Heart left ventricle (tissue), 16 donors: ENCODE measurements at regions of chr1 and their contacts with region 1.

Region 1: GRCh38 chr1:110460253-110461220 is 9.6 kb downstream of the PROK1 start:
- DNase-seq: peak in 4 of 5 donors; percentile 42 to 70 (median 64)
- ATAC-seq: peak; percentile 59 to 83 (median 82)
- H3K4me3 ChIP-seq: no peak overlapping the region
- H3K27ac ChIP-seq: no peak overlapping the region
- H3K4me1 ChIP-seq: no peaks in the 10 kb centered on the region
- H3K27me3 ChIP-seq: no peaks in the 10 kb centered on the region
- CTCF ChIP-seq: peak; percentile 89 to 98 (median 94)
- POLR2A ChIP-seq: no peak

Region 2: GRCh38 chr1:110203021-110203661 is 257.4 kb before region 1 on chr1:
- intact Hi-C with region 1: loop called (anchors 1 to 5 kb)
- DNase-seq: peak in 2 of 5 donors; percentile 43 to 44
- ATAC-seq: peak; percentile 30 to 57 (median 46)
- H3K4me3 ChIP-seq: no peak overlapping the region
- H3K27ac ChIP-seq: no peak overlapping the region
- H3K4me1 ChIP-seq: peaks cover 0 to 11% (median 0%) of the 10 kb centered on the region in 12 donors
- H3K27me3 ChIP-seq: no peaks in the 10 kb centered on the region
- CTCF ChIP-seq: peak; percentile 78 to 93 (median 86)
- POLR2A ChIP-seq: no peak

Region 3: GRCh38 chr1:110312188-110313121 is 148.1 kb before region 1 on chr1:
- intact Hi-C with region 1: loop called (anchors 2 to 10 kb)
- DNase-seq: peak; percentile 83 to 89 (median 85)
- ATAC-seq: peak; percentile 89 to 96 (median 94)
- H3K4me3 ChIP-seq: no peak overlapping the region
- H3K27ac ChIP-seq: no peak overlapping the region
- H3K4me1 ChIP-seq: peaks cover 0 to 50% (median 17%) of the 10 kb centered on the region in 12 donors
- H3K27me3 ChIP-seq: no peaks in the 10 kb centered on the region
- CTCF ChIP-seq: peak; percentile 84 to 98 (median 94)
- POLR2A ChIP-seq: no peak

Region 4: DNA sequence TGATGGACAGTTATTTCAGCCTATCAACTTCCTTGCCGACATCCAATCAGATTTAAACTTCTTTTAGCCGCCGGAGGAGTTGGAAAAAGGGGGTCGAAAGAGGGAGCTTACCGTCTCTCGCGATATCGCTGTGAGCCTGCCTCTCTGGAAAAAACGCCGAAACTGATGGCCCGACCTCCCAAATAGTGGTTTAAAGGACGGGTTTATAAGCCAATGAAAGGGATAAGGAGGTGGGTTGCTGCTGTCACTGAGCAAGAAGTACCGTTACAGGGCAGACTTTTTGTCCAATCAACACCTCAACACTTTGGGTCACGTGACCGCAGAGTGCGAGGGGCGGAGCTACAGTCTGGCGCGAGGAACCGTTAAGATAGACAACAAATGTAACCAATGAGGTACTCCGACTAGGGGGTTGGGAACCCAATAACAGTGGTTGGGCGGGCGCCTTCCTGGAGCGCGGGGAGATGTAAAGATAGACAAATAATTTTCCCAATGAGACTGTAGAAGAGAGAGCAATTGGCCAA is 121.6 kb before region 1 on chr1 and contains the start of gene RBM15:
- intact Hi-C with region 1: loop called in 1 of 10 experiments (anchors 5 kb)
- DNase-seq: peak; percentile 98 to 99 (median 99)
- ATAC-seq: peak; percentile 82 to 91 (median 88)
- H3K4me3 ChIP-seq: peak within 1 kb of the TSS; percentile 65 to 95 (median 82)
- H3K27ac ChIP-seq: peak within 1 kb of the TSS; percentile 89 to 100 (median 97)
- H3K4me1 ChIP-seq: peaks cover 5 to 61% (median 50%) of the 10 kb centered on the region in 12 donors
- H3K27me3 ChIP-seq: no peaks in the 10 kb centered on the region
- CTCF ChIP-seq: no peak
- POLR2A ChIP-seq: no peak
- total RNA-seq, gene RBM15: 14.1 to 24.4 (median 19.2) TPM

Region 5: DNA sequence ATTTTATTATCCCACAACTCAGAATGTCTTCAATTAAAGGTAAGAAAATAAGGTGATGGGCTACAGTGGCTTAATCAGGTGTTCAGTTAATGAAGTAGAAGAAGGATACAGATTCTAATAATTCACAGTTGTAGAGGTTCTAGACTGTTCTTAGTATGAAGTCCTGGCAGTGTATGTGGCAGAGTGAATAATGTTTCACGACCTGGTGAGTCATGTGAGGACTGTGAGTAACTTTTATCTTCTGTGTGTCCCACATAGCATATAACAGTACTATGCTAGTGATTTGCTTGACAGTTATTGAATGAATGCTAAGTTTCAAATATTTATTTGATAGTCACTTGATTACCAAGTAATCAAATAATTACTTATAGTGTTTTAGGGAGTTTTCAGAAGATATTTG is 89.7 kb before region 1 on chr1:
- intact Hi-C with region 1: no loop called
- DNase-seq: no peak
- ATAC-seq: peak in 3 of 4 donors; percentile 58 to 75 (median 68)
- H3K4me3 ChIP-seq: no peak overlapping the region
- H3K27ac ChIP-seq: no peak overlapping the region
- H3K4me1 ChIP-seq: peaks cover 0 to 4% (median 0%) of the 10 kb centered on the region in 12 donors
- H3K27me3 ChIP-seq: no peaks in the 10 kb centered on the region
- CTCF ChIP-seq: no peak
- POLR2A ChIP-seq: no peak

Region 6: DNA sequence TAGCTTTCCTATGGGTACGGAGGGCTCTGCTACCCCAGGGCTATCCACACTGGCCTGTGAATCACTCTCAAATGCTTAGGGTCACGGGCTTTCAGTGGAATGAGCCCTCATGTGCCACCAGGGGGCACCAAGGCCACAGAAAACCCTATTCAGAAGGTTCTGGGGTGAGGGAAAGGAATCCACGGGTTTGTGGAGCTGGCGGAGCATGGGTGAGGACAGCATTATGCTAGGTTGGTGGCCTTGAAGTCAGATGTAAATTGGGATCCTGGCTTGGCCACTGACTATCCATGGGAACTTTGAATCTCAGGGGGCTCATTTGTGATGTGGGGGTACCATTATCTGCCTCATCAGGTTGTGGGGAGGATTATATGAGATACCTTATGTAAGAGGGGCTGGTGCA is 48.0 kb before region 1 on chr1:
- intact Hi-C with region 1: loop called (anchors 1 to 5 kb)
- DNase-seq: peak; percentile 42 to 80 (median 70)
- ATAC-seq: peak; percentile 40 to 76 (median 58)
- H3K4me3 ChIP-seq: no peak overlapping the region
- H3K27ac ChIP-seq: no peak overlapping the region
- H3K4me1 ChIP-seq: peaks cover 0 to 34% (median 16%) of the 10 kb centered on the region in 12 donors
- H3K27me3 ChIP-seq: no peaks in the 10 kb centered on the region
- CTCF ChIP-seq: peak; percentile 61 to 83 (median 75)
- POLR2A ChIP-seq: no peak

Region 7: GRCh38 chr1:110495926-110496600 is 35.5 kb after region 1 on chr1:
- intact Hi-C with region 1: loop called in 1 of 10 experiments (anchors 1 kb)
- DNase-seq: peak in 4 of 5 donors; percentile 62 to 77 (median 68)
- ATAC-seq: peak; percentile 60 to 88 (median 81)
- H3K4me3 ChIP-seq: no peak overlapping the region
- H3K27ac ChIP-seq: no peak overlapping the region
- H3K4me1 ChIP-seq: no peaks in the 10 kb centered on the region
- H3K27me3 ChIP-seq: no peaks in the 10 kb centered on the region
- CTCF ChIP-seq: peak; percentile 78 to 94 (median 90)
- POLR2A ChIP-seq: no peak

Region 8: GRCh38 chr1:110746579-110747160 is 286.1 kb after region 1 on chr1:
- intact Hi-C with region 1: no loop called
- DNase-seq: peak in 4 of 5 donors; percentile 32 to 59 (median 35)
- ATAC-seq: no peak
- H3K4me3 ChIP-seq: no peak overlapping the region
- H3K27ac ChIP-seq: no peak overlapping the region
- H3K4me1 ChIP-seq: no peaks in the 10 kb centered on the region
- H3K27me3 ChIP-seq: peaks cover 0 to 46% (median 10%) of the 10 kb centered on the region in 9 donors
- CTCF ChIP-seq: no peak
- POLR2A ChIP-seq: no peak